Pancreas (tissue), 10 donors: ENCODE measurements at regions of chr3 and their contacts with region 1.

Region 1: GRCh38 chr3:193016437-193016901 is 98.8 kb upstream of the MB21D2 start:
- DNase-seq: peak in 5 of 6 donors; percentile 4 to 61 (median 43)
- ATAC-seq: peak in 3 of 4 donors; percentile 25 to 60 (median 35)
- H3K4me3 ChIP-seq: no peak overlapping the region
- H3K27ac ChIP-seq: no peak overlapping the region
- H3K4me1 ChIP-seq: peaks cover 0 to 2% (median 0%) of the 10 kb centered on the region in 3 donors
- H3K27me3 ChIP-seq: no peaks in the 10 kb centered on the region
- CTCF ChIP-seq: no peak

Region 2: DNA sequence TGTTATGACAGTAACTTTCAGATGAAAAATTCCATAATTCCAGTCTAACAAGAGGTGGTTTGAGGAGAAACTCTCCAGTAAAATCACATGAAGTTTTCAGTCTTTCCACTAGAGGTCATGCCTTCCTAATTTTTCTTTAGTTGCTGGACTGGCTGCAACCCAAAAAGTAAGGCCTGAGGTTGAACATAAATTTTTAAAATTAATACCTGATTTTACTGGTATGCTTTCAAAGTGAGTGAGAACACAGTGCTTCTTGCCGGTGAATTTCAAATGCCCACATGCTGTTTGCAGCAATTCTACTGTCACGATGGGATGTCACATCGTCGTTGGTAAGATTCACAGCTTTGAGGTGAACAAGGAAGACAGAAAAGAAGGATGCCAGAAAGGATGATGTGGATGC is 200.1 kb before region 1 on chr3:
- intact Hi-C with region 1: no loop called
- DNase-seq: peak in 1 of 6 donors; percentile 23
- ATAC-seq: peak; percentile 60 to 80 (median 73)
- H3K4me3 ChIP-seq: no peak overlapping the region
- H3K27ac ChIP-seq: no peak overlapping the region
- H3K4me1 ChIP-seq: no peaks in the 10 kb centered on the region
- H3K27me3 ChIP-seq: no peaks in the 10 kb centered on the region
- CTCF ChIP-seq: peak; percentile 28 to 70 (median 60)

Region 3: GRCh38 chr3:192929755-192930547 is 86.5 kb before region 1 on chr3:
- intact Hi-C with region 1: loop called in 1 of 3 experiments (anchors 10 kb)
- DNase-seq: no peak
- ATAC-seq: peak in 2 of 4 donors; percentile 34 to 67
- H3K4me3 ChIP-seq: no peak overlapping the region
- H3K27ac ChIP-seq: no peak overlapping the region
- H3K4me1 ChIP-seq: peaks cover 0 to 11% (median 0%) of the 10 kb centered on the region in 3 donors
- H3K27me3 ChIP-seq: no peaks in the 10 kb centered on the region
- CTCF ChIP-seq: no peak